Activated B cell treated with CpG ODN at 0.5 μM for 24 hours (primary cell): ENCODE measurements at regions of chr1 and their contacts with region 1.

Region 1: GRCh38 chr1:85276215-85276977 is at the start of gene BCL10:
- DNase-seq: peak; percentile 98
- ATAC-seq: peak; percentile 94
- H3K4me3 Mint-ChIP-seq: peak within 1 kb of the TSS; percentile 91
- H3K27ac Mint-ChIP-seq: peak within 1 kb of the TSS; percentile 94
- H3K4me1 Mint-ChIP-seq: peaks cover 60% of the 10 kb centered on the region
- H3K27me3 Mint-ChIP-seq: no peaks in the 10 kb centered on the region
- CTCF ChIP-seq: no peak
- total RNA-seq, gene BCL10: 52.5 and 53.3 TPM in 2 replicates

Region 2: GRCh38 chr1:84143796-84144565 is 1132.4 kb before region 1 on chr1 and contains the start of gene PRKACB:
- CTCF ChIA-PET with region 1: no interaction called
- POLR2A ChIA-PET with region 1: interaction called, 10 read pairs
- intact Hi-C with region 1: loop called (anchors 5 kb)
- DNase-seq: no peak
- ATAC-seq: peak; percentile 86
- H3K4me3 Mint-ChIP-seq: peak within 1 kb of the TSS; percentile 89
- H3K27ac Mint-ChIP-seq: peak within 1 kb of the TSS; percentile 97
- H3K4me1 Mint-ChIP-seq: peaks cover 52% of the 10 kb centered on the region
- H3K27me3 Mint-ChIP-seq: no peaks in the 10 kb centered on the region
- CTCF ChIP-seq: no peak
- total RNA-seq, gene PRKACB: 30.0 and 33.0 TPM in 2 replicates

Region 3: GRCh38 chr1:84506002-84506728 is 770.2 kb before region 1 on chr1 and contains the starts of genes GNG5 and SPATA1:
- CTCF ChIA-PET with region 1: no interaction called
- POLR2A ChIA-PET with region 1: interaction called, 12 read pairs
- intact Hi-C with region 1: loop called (anchors 1 kb)
- DNase-seq: peak; percentile 98
- ATAC-seq: peak; percentile 87
- H3K4me3 Mint-ChIP-seq: peak within 1 kb of the TSS; percentile 96
- H3K27ac Mint-ChIP-seq: peak within 1 kb of the TSS; percentile 98
- H3K4me1 Mint-ChIP-seq: peaks cover 37% of the 10 kb centered on the region
- H3K27me3 Mint-ChIP-seq: no peaks in the 10 kb centered on the region
- CTCF ChIP-seq: no peak
- total RNA-seq, gene GNG5: 57.0 and 63.5 TPM in 2 replicates
- total RNA-seq, gene SPATA1: 4.6 and 4.7 TPM in 2 replicates

Region 4: DNA sequence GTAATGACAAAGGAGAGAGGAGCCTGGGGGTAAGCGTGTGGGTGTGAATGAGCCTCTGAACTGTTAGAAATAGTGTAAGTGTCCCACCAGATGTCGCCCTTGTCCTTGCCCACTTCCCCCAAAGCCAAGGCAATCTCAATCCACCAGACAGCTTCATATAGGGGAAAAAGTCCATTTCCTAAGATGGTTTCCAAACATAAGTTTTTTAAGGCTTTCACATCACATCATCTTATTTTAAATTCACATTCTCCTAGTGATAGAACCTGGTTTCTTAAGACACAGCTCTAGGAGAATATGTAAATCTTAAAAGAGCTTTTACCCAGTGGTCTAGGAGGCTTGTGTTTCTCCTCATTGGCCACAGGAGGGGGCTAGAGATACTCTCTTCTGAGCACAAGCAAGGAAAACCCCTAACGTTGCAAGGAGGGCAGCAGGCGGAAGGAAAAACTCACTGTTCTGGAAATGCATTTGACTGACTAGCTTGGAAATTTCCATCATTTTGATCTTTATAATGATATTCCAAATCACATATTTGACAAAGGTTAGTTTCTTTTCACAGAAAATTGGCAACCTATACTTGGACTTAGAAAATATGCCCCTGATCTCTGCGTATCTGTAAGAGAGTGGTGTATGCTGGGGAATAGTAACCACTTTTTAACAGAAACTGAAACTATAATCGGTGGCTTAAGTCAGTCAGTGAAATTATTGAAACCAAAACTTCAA is 331.5 kb before region 1 on chr1:
- CTCF ChIA-PET with region 1: interaction called, 23 read pairs
- POLR2A ChIA-PET with region 1: interaction called, 22 read pairs
- intact Hi-C with region 1: loop called (anchors 1 kb)
- DNase-seq: peak; percentile 26
- ATAC-seq: peak; percentile 93
- H3K4me3 Mint-ChIP-seq: peak overlapping the region; percentile 86
- H3K27ac Mint-ChIP-seq: peak overlapping the region; percentile 95
- H3K4me1 Mint-ChIP-seq: peaks cover 17% of the 10 kb centered on the region
- H3K27me3 Mint-ChIP-seq: no peaks in the 10 kb centered on the region
- CTCF ChIP-seq: peak; percentile 100

Region 5: GRCh38 chr1:85091671-85092280 is 184.6 kb before region 1 on chr1:
- CTCF ChIA-PET with region 1: no interaction called
- POLR2A ChIA-PET with region 1: no interaction called
- intact Hi-C with region 1: no loop called
- DNase-seq: no peak
- ATAC-seq: no peak
- H3K4me3 Mint-ChIP-seq: no peak overlapping the region
- H3K27ac Mint-ChIP-seq: no peak overlapping the region
- H3K4me1 Mint-ChIP-seq: peaks cover 6% of the 10 kb centered on the region
- H3K27me3 Mint-ChIP-seq: peaks cover 16% of the 10 kb centered on the region
- CTCF ChIP-seq: no peak

Region 6: DNA sequence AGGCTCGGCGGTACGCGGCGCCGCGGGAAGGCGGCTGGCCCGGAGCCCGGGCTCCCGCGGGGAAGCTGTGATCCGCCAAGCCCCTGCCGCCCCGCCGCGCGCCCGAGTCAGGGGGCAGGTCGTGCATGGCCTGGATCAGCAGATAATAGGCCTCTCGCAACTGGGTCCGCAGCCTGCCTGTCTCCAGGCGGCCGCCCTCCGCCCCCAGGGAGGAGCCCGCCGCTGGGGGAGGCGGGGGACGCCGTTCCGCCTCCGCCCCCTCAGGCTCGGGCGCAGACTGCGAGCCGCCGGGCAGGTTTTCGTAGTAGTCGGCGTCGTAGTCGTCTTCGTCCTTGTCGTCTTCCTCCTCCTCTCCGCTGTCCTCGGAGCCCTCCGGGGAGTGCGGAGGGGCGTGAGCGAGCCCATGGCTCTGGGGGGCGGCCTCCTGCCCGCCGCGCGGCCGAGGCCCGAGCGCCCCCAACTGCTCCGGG is 75.5 kb before region 1 on chr1 and contains the start of gene SYDE2:
- CTCF ChIA-PET with region 1: no interaction called
- POLR2A ChIA-PET with region 1: interaction called, 8 read pairs
- intact Hi-C with region 1: loop called (anchors 1 kb)
- DNase-seq: peak; percentile 69
- ATAC-seq: peak; percentile 81
- H3K4me3 Mint-ChIP-seq: peak within 1 kb of the TSS; percentile 92
- H3K27ac Mint-ChIP-seq: peak within 1 kb of the TSS; percentile 79
- H3K4me1 Mint-ChIP-seq: peaks cover 14% of the 10 kb centered on the region
- H3K27me3 Mint-ChIP-seq: peaks cover 26% of the 10 kb centered on the region
- CTCF ChIP-seq: no peak
- total RNA-seq, gene SYDE2: 0.38 and 0.64 TPM in 2 replicates

Region 7: GRCh38 chr1:85707990-85708828 is 431.8 kb after region 1 on chr1 and contains the start of gene ZNHIT6:
- CTCF ChIA-PET with region 1: interaction called, 3 read pairs
- POLR2A ChIA-PET with region 1: interaction called, 9 read pairs
- intact Hi-C with region 1: loop called (anchors 10 kb)
- DNase-seq: peak; percentile 69
- ATAC-seq: peak; percentile 96
- H3K4me3 Mint-ChIP-seq: no peak within 1 kb of the TSS
- H3K27ac Mint-ChIP-seq: no peak within 1 kb of the TSS
- H3K4me1 Mint-ChIP-seq: peaks cover 24% of the 10 kb centered on the region
- H3K27me3 Mint-ChIP-seq: no peaks in the 10 kb centered on the region
- CTCF ChIP-seq: no peak
- total RNA-seq, gene ZNHIT6: 19.6 and 21.1 TPM in 2 replicates